Common myeloid progenitor, CD34-positive (primary cell): ENCODE measurements at regions of chr14 and their contacts with region 1.

Region 1: GRCh38 chr14:22524115-22524783 is 64.8 kb downstream of the DAD1 start:
- DNase-seq: no peak
- H3K4me3 ChIP-seq: no peak overlapping the region
- H3K27ac ChIP-seq: no peak overlapping the region
- H3K4me1 ChIP-seq: peaks cover 3 to 20% (median 12%) of the 10 kb centered on the region in 4 experiments
- H3K27me3 ChIP-seq: no peaks in the 10 kb centered on the region

Region 2: GRCh38 chr14:22536853-22537338 is 12.6 kb after region 1 on chr14:
- CTCF ChIA-PET with region 1: interaction called, 12 read pairs
- POLR2A ChIA-PET with region 1: interaction called, 3 read pairs
- DNase-seq: peak; percentile 72 to 89 (median 87)
- H3K4me3 ChIP-seq: no peak overlapping the region
- H3K27ac ChIP-seq: no peak overlapping the region
- H3K4me1 ChIP-seq: peaks cover 0 to 12% (median 5%) of the 10 kb centered on the region in 4 experiments
- H3K27me3 ChIP-seq: no peaks in the 10 kb centered on the region